Mammary epithelial cell (primary cell): ENCODE measurements at regions of chr2 and their contacts with region 1.

Region 1: GRCh38 chr2:113203901-113204519 is 30.2 kb downstream of the PSD4 start:
- DNase-seq: peak; percentile 64
- H3K4me3 ChIP-seq: no peak overlapping the region
- H3K27ac ChIP-seq: no peak overlapping the region
- H3K4me1 ChIP-seq: peaks cover 36% of the 10 kb centered on the region
- H3K27me3 ChIP-seq: no peaks in the 10 kb centered on the region
- CTCF ChIP-seq: peak; percentile 91 to 94

Region 2: GRCh38 chr2:113105047-113105785 is 98.8 kb before region 1 on chr2:
- CTCF ChIA-PET with region 1: no interaction called
- dilution Hi-C with region 1: no loop called
- in situ Hi-C with region 1: no loop called
- intact Hi-C with region 1: no loop called
- DNase-seq: peak; percentile 75
- H3K4me3 ChIP-seq: no peak overlapping the region
- H3K27ac ChIP-seq: no peak overlapping the region
- H3K4me1 ChIP-seq: no peaks in the 10 kb centered on the region
- H3K27me3 ChIP-seq: no peaks in the 10 kb centered on the region
- CTCF ChIP-seq: no peak

Region 3: DNA sequence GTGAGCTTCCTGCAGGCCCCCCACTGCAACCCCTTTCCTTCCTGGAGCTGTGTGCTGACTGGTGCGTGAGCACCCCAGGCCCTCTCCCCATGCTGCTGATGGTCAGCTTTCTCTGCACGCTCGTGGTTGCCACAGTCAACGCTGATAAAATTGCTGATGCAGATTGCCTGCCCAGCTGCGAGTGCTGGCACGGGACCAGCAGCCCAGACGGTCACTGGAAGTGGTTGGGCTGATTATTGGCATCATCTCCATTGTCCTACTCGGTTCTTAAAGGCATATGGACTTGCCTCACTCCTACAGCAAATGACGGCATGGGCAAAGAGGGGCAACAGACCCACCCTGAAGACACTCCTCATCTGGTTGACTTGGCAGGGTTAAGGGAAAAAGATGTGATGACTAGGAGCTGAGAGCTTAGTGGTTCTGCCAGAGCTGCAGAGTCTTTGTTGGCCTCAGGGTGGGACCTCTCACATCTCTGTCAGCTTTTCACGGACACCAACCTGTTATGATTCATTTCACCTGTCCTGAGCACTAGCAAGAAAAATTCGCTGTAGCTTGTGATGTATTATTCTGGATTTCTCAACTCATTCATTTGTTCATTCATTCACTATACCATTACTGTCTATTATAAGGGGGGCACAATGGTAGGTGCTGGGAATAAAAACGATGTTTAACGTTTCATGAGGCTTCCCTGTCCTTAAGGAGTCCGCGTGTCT is 36.3 kb after region 1 on chr2:
- CTCF ChIA-PET with region 1: interaction called, 4 read pairs
- dilution Hi-C with region 1: no loop called
- in situ Hi-C with region 1: no loop called
- intact Hi-C with region 1: loop called (anchors 1 kb)
- DNase-seq: peak; percentile 95
- H3K4me3 ChIP-seq: peak overlapping the region in 2 of 3 experiments; percentile 2 to 12
- H3K27ac ChIP-seq: peak overlapping the region; percentile 95
- H3K4me1 ChIP-seq: peaks cover 29% of the 10 kb centered on the region
- H3K27me3 ChIP-seq: no peaks in the 10 kb centered on the region
- CTCF ChIP-seq: peak; percentile 16 to 19

Region 4: DNA sequence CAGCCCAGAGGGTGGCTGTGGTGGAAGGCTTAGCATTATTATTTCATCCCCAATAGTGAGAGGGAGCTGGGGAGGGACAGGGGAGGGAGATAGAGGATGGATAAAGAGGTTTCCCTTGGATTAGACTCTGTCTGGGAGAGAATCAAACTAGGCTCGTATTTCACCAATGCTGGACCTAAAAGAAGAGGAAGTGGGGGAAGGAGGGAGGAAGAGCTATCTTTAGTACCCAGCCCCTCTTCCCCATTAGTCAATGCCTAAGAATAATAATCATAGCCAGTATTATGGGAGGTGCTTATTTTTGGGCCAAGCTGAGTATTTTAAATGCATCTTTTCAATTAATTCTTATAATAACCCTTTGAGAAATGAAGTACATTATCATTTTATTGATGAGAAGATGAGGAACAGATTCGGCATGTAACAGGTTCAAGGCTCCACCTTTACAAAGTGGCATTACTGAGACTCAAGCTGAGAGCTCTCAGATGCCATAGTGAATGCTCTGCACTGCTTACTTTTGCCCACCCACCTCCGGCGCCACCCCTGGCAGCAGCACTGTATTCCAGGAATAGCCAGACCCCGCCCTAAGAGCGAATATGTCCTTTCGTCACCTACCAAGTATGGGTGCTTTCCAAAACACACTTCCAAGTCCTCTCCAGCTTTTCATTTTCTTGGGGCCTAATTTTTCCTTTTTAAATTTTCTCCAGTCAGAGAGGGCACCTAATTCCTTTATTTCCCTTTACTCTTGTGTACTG is 53.7 kb after region 1 on chr2:
- CTCF ChIA-PET with region 1: no interaction called
- dilution Hi-C with region 1: no loop called
- in situ Hi-C with region 1: no loop called
- intact Hi-C with region 1: no loop called
- DNase-seq: no peak
- H3K4me3 ChIP-seq: no peak overlapping the region
- H3K27ac ChIP-seq: no peak overlapping the region
- H3K4me1 ChIP-seq: peaks cover 15% of the 10 kb centered on the region
- H3K27me3 ChIP-seq: no peaks in the 10 kb centered on the region
- CTCF ChIP-seq: no peak

Region 5: GRCh38 chr2:113390124-113390849 is 186.3 kb after region 1 on chr2:
- CTCF ChIA-PET with region 1: no interaction called
- dilution Hi-C with region 1: no loop called
- in situ Hi-C with region 1: no loop called
- intact Hi-C with region 1: loop called (anchors 5 kb)
- DNase-seq: peak; percentile 51
- H3K4me3 ChIP-seq: no peak overlapping the region
- H3K27ac ChIP-seq: no peak overlapping the region
- H3K4me1 ChIP-seq: no peaks in the 10 kb centered on the region
- H3K27me3 ChIP-seq: no peaks in the 10 kb centered on the region
- CTCF ChIP-seq: peak; percentile 93 to 96